ENCODE measurements at regions of chr1 and their contacts with region 1.

Region 1: DNA sequence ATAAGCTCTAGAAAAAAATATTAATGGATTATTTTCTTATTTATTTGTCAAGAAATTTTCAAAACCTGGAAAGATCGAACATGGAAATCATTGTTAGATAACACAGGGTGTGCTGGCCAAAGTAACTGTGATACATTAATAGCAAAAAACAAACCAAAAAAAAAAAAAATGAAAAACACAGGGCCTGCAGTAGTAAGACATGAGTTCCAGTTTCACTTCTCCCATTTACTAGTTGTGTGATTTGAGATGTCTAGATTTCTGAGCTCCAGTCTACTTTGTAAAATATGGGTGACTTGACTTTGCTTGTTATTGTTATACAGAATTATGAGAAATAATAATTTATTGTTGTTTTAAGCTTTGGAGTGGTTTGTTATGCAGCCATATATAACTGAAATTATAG is 13.6 kb downstream of the FAM177B start:
- DNase-seq: no peak
- ATAC-seq: peak; percentile 85
- H3K4me3 ChIP-seq: no peak overlapping the region
- H3K27ac ChIP-seq: no peak overlapping the region
- H3K4me1 ChIP-seq: peaks cover 6% of the 10 kb centered on the region
- H3K27me3 ChIP-seq: no peaks in the 10 kb centered on the region
- CTCF ChIP-seq: no peak
- EP300 ChIP-seq: no peak
- POLR2A ChIP-seq: no peak
- RAD21 ChIP-seq: no peak

Region 2: GRCh38 chr1:222592171-222592570 is 158.5 kb before region 1 on chr1:
- CTCF ChIA-PET with region 1: no interaction called
- POLR2A ChIA-PET with region 1: no interaction called
- RAD21 ChIA-PET with region 1: no interaction called
- SMC1A ChIA-PET with region 1: no interaction called
- in situ Hi-C with region 1: no loop called
- intact Hi-C with region 1: no loop called
- DNase-seq: no peak
- ATAC-seq: no peak
- H3K4me3 ChIP-seq: no peak overlapping the region
- H3K27ac ChIP-seq: no peak overlapping the region
- H3K4me1 ChIP-seq: no peaks in the 10 kb centered on the region; the same call in 1 of the 2 replicates
- H3K27me3 ChIP-seq: no peaks in the 10 kb centered on the region
- CTCF ChIP-seq: no peak
- EP300 ChIP-seq: no peak
- POLR2A ChIP-seq: no peak
- RAD21 ChIP-seq: no peak

Region 3: GRCh38 chr1:222712253-222713090 is 38.2 kb before region 1 on chr1 and contains the starts of genes AIDA and BROX:
- CTCF ChIA-PET with region 1: no interaction called
- POLR2A ChIA-PET with region 1: no interaction called
- RAD21 ChIA-PET with region 1: no interaction called
- SMC1A ChIA-PET with region 1: no interaction called
- in situ Hi-C with region 1: no loop called
- intact Hi-C with region 1: no loop called
- DNase-seq: no peak
- ATAC-seq: peak; percentile 91
- H3K4me3 ChIP-seq: peak within 1 kb of the TSS; percentile 92
- H3K27ac ChIP-seq: peak within 1 kb of the TSS; percentile 98
- H3K4me1 ChIP-seq: no peaks in the 10 kb centered on the region
- H3K27me3 ChIP-seq: no peaks in the 10 kb centered on the region
- CTCF ChIP-seq: no peak
- EP300 ChIP-seq: no peak
- POLR2A ChIP-seq: peak; percentile 64
- RAD21 ChIP-seq: no peak
- polyA plus RNA-seq, gene AIDA: 8.9 to 12.8 TPM
- polyA plus RNA-seq, gene BROX: 19.4 to 42.0 TPM

Region 4: GRCh38 chr1:222739465-222739864 is 11.2 kb before region 1 on chr1:
- CTCF ChIA-PET with region 1: interaction called, 21 read pairs
- POLR2A ChIA-PET with region 1: interaction called, 4 read pairs
- RAD21 ChIA-PET with region 1: interaction called, 3 read pairs
- SMC1A ChIA-PET with region 1: interaction called, 16 read pairs
- in situ Hi-C with region 1: no loop called
- intact Hi-C with region 1: no loop called
- DNase-seq: no peak
- ATAC-seq: no peak
- H3K4me3 ChIP-seq: no peak overlapping the region
- H3K27ac ChIP-seq: no peak overlapping the region
- H3K4me1 ChIP-seq: no peaks in the 10 kb centered on the region
- H3K27me3 ChIP-seq: no peaks in the 10 kb centered on the region
- CTCF ChIP-seq: no peak
- EP300 ChIP-seq: no peak
- POLR2A ChIP-seq: no peak
- RAD21 ChIP-seq: no peak

Measured in GM12878 (cell line).